ENCODE measurements at regions of chr9 and their contacts with region 1.

Region 1: DNA sequence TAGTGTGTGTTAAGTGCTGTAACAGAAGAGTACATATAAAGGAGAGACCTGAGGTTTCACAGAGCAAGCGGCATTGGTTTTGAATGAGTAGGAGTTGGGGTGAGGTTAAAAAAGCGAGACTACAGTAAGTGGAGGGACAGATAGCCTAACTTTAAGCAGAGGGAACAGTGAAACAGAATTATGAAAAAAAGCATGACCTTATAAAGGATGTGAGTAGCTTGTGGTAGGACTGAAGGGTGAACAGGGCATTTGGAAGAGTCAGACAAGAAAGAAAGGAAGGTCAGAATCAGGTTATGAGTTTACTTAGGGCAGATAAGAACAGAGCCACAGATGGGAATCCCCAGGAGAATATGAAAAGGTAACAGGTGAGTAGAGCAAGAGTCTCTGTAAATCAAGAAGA is 22.5 kb downstream of the MSANTD3 start:
- DNase-seq: no peak
- H3K4me3 ChIP-seq: no peak overlapping the region
- H3K27ac ChIP-seq: no peak overlapping the region
- H3K4me1 ChIP-seq: peaks cover 10% of the 10 kb centered on the region
- H3K27me3 ChIP-seq: no peaks in the 10 kb centered on the region
- CTCF ChIP-seq: no peak
- POLR2A ChIP-seq: no peak

Region 2: GRCh38 chr9:100437860-100438805 is 11.3 kb before region 1 on chr9:
- CTCF ChIA-PET with region 1: interaction called, 13 read pairs
- POLR2A ChIA-PET with region 1: no interaction called
- dilution Hi-C with region 1: no loop called
- intact Hi-C with region 1: no loop called
- DNase-seq: peak; percentile 83
- H3K4me3 ChIP-seq: no peak overlapping the region
- H3K27ac ChIP-seq: no peak overlapping the region
- H3K4me1 ChIP-seq: no peaks in the 10 kb centered on the region
- H3K27me3 ChIP-seq: no peaks in the 10 kb centered on the region
- CTCF ChIP-seq: peak; percentile 75 to 87
- POLR2A ChIP-seq: no peak